ENCODE measurements at regions of chr10 and their contacts with region 1.

Region 1: DNA sequence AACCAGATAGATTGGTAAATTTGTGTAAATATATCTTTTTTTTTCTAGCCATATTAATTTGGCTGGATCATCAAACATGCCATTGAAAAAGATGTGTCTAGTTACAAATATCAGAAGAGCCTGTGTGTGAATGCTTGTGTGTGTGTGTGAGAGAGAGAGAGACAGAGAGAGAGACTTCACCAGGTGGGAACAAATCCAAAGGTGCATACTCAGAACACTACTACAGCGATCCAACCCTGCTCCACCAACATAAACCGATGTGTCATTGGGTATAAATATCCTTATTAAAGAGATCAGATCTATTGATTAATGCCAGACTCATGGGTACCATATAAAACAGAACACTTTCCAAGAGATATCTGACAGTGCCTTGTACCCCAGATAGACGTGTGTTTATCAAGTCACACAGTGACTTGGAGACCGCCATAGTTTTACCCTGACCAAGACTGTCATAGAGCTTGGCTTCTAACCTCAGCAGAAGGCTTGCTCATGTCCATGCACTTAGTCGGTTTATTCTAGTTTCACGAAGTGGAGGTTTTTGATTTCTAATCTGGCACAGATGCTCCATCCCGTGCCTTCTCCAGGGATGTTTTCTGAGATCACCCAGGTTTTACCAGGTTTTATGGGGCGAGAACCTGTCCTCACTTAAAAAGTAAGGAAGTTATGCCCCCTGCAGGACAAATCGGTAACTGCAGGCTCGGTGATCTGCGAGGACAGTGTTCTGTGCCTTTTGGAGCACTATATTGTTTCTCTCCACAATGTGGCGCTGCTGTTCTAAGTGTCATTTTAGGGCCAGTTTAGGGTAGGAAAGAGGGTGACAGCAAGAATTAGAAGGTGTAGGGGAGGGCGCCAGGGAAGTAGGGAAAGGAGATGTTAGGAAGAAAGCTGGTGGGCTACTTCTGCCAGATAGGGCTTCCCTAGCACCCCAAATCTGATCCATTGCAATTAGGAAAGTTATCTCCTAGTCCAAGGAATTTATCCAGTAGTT is 29.3 kb upstream of the WNT8B start:
- DNase-seq: peak; percentile 92
- ATAC-seq: peak; percentile 97
- H3K4me3 ChIP-seq: no peak overlapping the region
- H3K27ac ChIP-seq: peak overlapping the region; percentile 12; the same call in 1 of the 2 replicates
- H3K4me1 ChIP-seq: no peaks in the 10 kb centered on the region
- H3K27me3 ChIP-seq: no peaks in the 10 kb centered on the region
- CTCF ChIP-seq: peak; percentile 99

Region 2: GRCh38 chr10:100303724-100304319 is 129.7 kb before region 1 on chr10:
- CTCF ChIA-PET with region 1: interaction called, 3 read pairs
- POLR2A ChIA-PET with region 1: no interaction called
- in situ Hi-C with region 1: no loop called
- intact Hi-C with region 1: loop called (anchors 10 kb)
- DNase-seq: peak; percentile 41
- ATAC-seq: peak; percentile 89
- H3K4me3 ChIP-seq: no peak overlapping the region
- H3K27ac ChIP-seq: no peak overlapping the region
- H3K4me1 ChIP-seq: no peaks in the 10 kb centered on the region
- H3K27me3 ChIP-seq: peaks cover 8% of the 10 kb centered on the region; the same call in 1 of the 2 replicates
- CTCF ChIP-seq: peak; percentile 86

Region 3: GRCh38 chr10:100338434-100339036 is 95.0 kb before region 1 on chr10:
- CTCF ChIA-PET with region 1: interaction called, 12 read pairs
- POLR2A ChIA-PET with region 1: no interaction called
- in situ Hi-C with region 1: loop called (anchors 10 kb)
- intact Hi-C with region 1: loop called (anchors 1 kb)
- DNase-seq: no peak
- ATAC-seq: peak; percentile 82
- H3K4me3 ChIP-seq: no peak overlapping the region
- H3K27ac ChIP-seq: peak overlapping the region; percentile 20; the same call in 1 of the 2 replicates
- H3K4me1 ChIP-seq: peaks cover 26% of the 10 kb centered on the region
- H3K27me3 ChIP-seq: peaks cover 8% of the 10 kb centered on the region
- CTCF ChIP-seq: peak; percentile 99

Region 4: DNA sequence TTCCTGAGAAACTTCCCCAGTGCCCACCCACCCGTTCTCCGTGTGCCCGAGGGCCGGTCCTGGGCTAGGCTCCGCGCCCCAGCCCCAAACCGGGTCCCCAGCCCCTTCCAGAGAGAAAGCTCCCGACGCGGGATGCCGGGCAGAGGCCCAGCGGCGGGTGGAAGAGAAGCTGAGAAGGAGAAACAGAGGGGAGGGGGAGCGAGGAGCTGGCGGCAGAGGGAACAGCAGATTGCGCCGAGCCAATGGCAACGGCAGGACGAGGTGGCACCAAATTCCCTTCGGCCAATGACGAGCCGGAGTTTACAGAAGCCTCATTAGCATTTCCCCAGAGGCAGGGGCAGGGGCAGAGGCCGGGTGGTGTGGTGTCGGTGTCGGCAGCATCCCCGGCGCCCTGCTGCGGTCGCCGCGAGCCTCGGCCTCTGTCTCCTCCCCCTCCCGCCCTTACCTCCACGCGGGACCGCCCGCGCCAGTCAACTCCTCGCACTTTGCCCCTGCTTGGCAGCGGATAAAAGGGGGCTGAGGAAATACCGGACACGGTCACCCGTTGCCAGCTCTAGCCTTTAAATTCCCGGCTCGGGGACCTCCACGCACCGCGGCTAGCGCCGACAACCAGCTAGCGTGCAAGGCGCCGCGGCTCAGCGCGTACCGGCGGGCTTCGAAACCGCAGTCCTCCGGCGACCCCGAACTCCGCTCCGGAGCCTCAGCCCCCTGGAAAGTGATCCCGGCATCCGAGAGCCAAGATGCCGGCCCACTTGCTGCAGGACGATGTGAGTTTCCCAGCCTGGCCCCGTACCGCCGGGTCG is 86.6 kb before region 1 on chr10 and contains the start of gene SCD:
- CTCF ChIA-PET with region 1: interaction called, 8 read pairs
- POLR2A ChIA-PET with region 1: interaction called, 18 read pairs
- in situ Hi-C with region 1: no loop called
- intact Hi-C with region 1: loop called (anchors 1 kb)
- DNase-seq: peak; percentile 81
- ATAC-seq: peak; percentile 94
- H3K4me3 ChIP-seq: peak within 1 kb of the TSS; percentile 89 to 94
- H3K27ac ChIP-seq: peak within 1 kb of the TSS; percentile 95
- H3K4me1 ChIP-seq: peaks cover 47% of the 10 kb centered on the region
- H3K27me3 ChIP-seq: no peaks in the 10 kb centered on the region
- CTCF ChIP-seq: no peak
- total RNA-seq, gene SCD: 1,345 TPM

Region 5: GRCh38 chr10:100373298-100374136 is 60.0 kb before region 1 on chr10:
- CTCF ChIA-PET with region 1: no interaction called
- POLR2A ChIA-PET with region 1: interaction called, 6 read pairs
- in situ Hi-C with region 1: no loop called
- intact Hi-C with region 1: loop called (anchors 5 kb)
- DNase-seq: peak; percentile 95
- ATAC-seq: peak; percentile 93
- H3K4me3 ChIP-seq: peak overlapping the region; percentile 72 to 82
- H3K27ac ChIP-seq: peak overlapping the region; percentile 100
- H3K4me1 ChIP-seq: peaks cover 41% of the 10 kb centered on the region
- H3K27me3 ChIP-seq: no peaks in the 10 kb centered on the region
- CTCF ChIP-seq: no peak

Region 6: DNA sequence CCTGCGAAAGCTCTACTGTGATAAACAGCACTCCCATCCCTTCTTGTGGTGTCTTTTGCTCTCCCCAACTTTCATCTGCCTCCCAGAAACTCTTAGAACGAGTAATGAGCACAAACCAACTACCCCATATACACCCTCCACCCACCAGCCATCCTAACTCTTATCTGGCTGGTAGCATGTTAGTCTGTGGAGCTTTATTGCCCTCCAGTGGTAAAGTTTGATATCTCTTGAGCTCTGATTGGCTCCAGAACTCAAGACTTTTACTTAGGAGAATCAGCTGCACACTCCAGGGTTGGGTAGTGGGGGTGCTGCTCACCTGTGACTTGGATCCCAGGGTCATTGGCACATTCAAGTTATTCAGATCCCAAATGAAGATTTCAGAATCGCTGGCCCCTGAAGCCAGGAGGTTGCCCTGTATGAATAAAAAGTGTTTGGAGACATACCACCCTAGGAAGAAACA is 75.2 kb after region 1 on chr10:
- CTCF ChIA-PET with region 1: interaction called, 14 read pairs
- POLR2A ChIA-PET with region 1: no interaction called
- in situ Hi-C with region 1: no loop called
- intact Hi-C with region 1: loop called (anchors 1 kb)
- DNase-seq: no peak
- ATAC-seq: peak; percentile 89
- H3K4me3 ChIP-seq: no peak overlapping the region
- H3K27ac ChIP-seq: no peak overlapping the region
- H3K4me1 ChIP-seq: no peaks in the 10 kb centered on the region
- H3K27me3 ChIP-seq: no peaks in the 10 kb centered on the region
- CTCF ChIP-seq: peak; percentile 88

Region 7: GRCh38 chr10:100518761-100519241 is 85.3 kb after region 1 on chr10:
- CTCF ChIA-PET with region 1: interaction called, 15 read pairs
- POLR2A ChIA-PET with region 1: no interaction called
- in situ Hi-C with region 1: no loop called
- intact Hi-C with region 1: no loop called
- DNase-seq: peak; percentile 48
- ATAC-seq: peak; percentile 81
- H3K4me3 ChIP-seq: no peak overlapping the region
- H3K27ac ChIP-seq: no peak overlapping the region
- H3K4me1 ChIP-seq: no peaks in the 10 kb centered on the region
- H3K27me3 ChIP-seq: no peaks in the 10 kb centered on the region
- CTCF ChIP-seq: peak; percentile 90